ENCODE measurements at regions of chr1 and their contacts with region 1.

Region 1: GRCh38 chr1:62906428-62906886 is 122.5 kb downstream of the ATG4C start:
- DNase-seq: no peak
- H3K4me3 ChIP-seq: no peak overlapping the region
- H3K27me3 ChIP-seq: no peaks in the 10 kb centered on the region; the same call in 1 of the 2 replicates
- CTCF ChIP-seq: peak; percentile 50

Region 2: DNA sequence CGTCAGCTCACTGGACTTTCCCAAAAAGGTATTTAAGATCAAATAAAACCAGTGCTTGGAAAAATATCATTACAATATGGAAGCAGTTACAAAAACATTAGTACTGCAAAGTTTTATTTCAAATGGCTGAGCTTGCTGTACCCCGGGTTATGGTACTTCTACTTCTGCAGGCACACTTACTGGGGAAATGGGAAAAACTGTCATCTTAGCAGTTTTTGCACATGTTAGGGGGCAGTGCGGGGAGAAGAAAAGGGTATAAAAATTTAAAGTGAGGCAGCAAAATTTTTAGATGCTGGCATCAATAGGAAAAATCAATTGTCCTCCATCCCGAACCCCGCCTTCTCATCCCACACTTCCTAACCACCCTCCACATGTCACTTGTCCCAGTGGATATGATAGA is 10.9 kb after region 1 on chr1:
- CTCF ChIA-PET with region 1: interaction called, 14 read pairs
- POLR2A ChIA-PET with region 1: no interaction called
- DNase-seq: no peak
- H3K4me3 ChIP-seq: no peak overlapping the region
- H3K27me3 ChIP-seq: no peaks in the 10 kb centered on the region
- CTCF ChIP-seq: no peak

Region 3: GRCh38 chr1:63759778-63760177 is 853.3 kb after region 1 on chr1:
- CTCF ChIA-PET with region 1: no interaction called
- POLR2A ChIA-PET with region 1: no interaction called
- DNase-seq: no peak
- H3K4me3 ChIP-seq: no peak overlapping the region
- H3K27me3 ChIP-seq: 0 out of 2 replicates have a peak, but pooled peaks cover 3% of the 10 kb centered on the region
- CTCF ChIP-seq: no peak